ENCODE measurements at regions of chr17 and their contacts with region 1.

Region 1: GRCh38 chr17:18377437-18378204 is at the start of gene EVPLL:
- DNase-seq: peak; percentile 93
- H3K4me3 Mint-ChIP-seq: peak within 1 kb of the TSS; percentile 68
- H3K27ac Mint-ChIP-seq: peak within 1 kb of the TSS; percentile 19
- H3K4me1 Mint-ChIP-seq: peaks cover 15% of the 10 kb centered on the region
- H3K27me3 Mint-ChIP-seq: no peaks in the 10 kb centered on the region
- CTCF ChIP-seq: no peak
- total RNA-seq, gene EVPLL: 0.70 and 0.88 TPM in 2 replicates

Region 2: DNA sequence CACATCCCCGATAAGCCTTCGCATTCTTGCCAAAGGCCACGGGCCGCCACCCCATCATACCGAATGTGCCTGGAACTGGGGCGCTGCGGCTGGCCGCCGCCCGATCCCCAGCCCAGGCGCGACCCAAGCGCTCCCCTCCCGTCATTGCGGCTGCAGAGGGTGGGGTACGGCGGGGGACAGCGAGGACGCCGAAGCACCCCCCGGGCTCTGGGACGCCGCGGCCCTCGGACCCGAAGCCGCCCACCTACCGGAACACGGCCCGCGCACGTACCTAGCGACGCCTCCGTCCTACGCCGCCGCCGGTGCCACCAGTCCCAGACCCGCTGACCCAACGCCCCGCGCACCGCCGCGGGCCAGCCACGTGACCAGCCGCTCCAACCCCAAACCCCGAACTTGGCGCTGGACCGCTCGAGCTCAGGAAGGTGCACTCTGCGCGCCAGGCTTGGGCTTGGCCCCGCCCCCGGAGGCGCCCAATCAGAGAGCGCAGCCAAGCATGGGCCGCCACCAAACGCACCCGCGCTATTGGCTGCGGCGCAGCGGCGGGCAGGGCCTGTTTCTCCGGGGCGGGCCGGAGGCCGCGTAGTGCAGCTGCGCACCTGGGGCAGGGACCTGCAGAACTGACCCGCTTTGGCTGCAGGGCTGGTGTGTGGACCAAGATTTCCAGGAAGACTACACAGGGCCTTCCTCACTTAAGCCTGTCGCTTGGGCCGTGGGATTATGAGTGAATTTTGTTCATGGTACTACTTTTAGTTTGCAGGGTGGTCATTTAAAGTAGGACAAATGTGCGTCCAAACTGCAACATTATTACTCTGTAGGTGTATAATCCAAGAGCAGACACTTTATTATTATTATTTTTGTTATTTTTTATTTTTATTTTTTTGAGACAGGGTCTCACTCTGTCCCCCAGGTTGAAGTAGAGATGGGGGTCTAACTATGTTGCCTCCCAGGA is 14.2 kb before region 1 on chr17 and contains the start of gene SHMT1:
- CTCF ChIA-PET with region 1: no interaction called
- POLR2A ChIA-PET with region 1: interaction called, 16 read pairs
- intact Hi-C with region 1: no loop called
- DNase-seq: peak; percentile 95
- H3K4me3 Mint-ChIP-seq: peak within 1 kb of the TSS; percentile 89
- H3K27ac Mint-ChIP-seq: peak within 1 kb of the TSS; percentile 74
- H3K4me1 Mint-ChIP-seq: peaks cover 8% of the 10 kb centered on the region
- H3K27me3 Mint-ChIP-seq: no peaks in the 10 kb centered on the region
- CTCF ChIP-seq: no peak
- total RNA-seq, gene SHMT1: 17.0 and 23.0 TPM in 2 replicates